Activated CD8-positive, alpha-beta T cell treated with anti-CD3 and anti-CD28 coated beads for 36 hours (primary cell): ENCODE measurements at regions of chr19 and their contacts with region 1.

Region 1: GRCh38 chr19:2151339-2152229 is at the start of gene AP3D1:
- DNase-seq: peak; percentile 100
- ATAC-seq: peak; percentile 92
- H3K4me3 Mint-ChIP-seq: peak within 1 kb of the TSS; percentile 81
- H3K27ac Mint-ChIP-seq: peak within 1 kb of the TSS; percentile 80
- H3K4me1 Mint-ChIP-seq: peaks cover 39% of the 10 kb centered on the region
- H3K27me3 Mint-ChIP-seq: no peaks in the 10 kb centered on the region
- CTCF ChIP-seq: no peak
- total RNA-seq, gene AP3D1: 73.7 to 74.1 TPM

Region 2: DNA sequence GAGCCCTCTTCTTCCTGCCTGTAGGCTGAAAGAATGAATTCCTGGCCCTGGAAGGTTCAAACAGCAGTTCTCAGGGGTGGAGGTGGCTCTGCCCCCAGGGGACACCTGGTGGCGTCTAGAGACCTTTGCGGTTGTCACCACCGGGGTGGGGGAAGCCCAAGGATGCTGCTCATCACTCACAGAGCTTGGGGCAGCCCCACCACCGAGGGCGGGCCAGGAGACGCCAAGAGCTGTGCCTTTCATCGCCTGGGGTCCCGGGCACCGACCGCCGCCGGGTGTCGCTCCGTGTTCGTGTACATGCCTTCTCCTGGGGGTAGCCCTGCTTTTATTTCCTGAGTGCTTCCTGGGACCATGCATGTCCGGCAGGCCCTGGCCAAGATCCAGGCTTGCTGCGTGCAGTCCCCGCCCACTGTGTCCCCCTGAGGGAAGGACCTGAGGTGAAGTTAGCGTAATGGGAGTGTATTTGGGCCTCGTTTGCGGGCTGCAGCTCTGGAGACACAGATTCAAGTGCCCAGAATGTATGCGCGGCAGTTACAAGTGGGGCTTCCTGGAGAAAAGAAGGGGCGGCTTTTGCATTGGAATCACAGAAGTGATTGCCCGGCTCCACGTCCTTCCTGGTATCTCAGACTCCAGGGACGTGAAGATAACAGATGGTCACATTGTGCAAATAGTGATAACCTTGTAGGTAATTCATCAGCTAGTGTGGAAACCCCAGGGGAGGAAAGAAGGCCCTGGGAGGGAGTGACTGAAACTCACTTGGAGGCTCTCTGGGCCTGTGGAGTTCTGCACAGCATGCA is 20.0 kb after region 1 on chr19:
- CTCF ChIA-PET with region 1: interaction called, 15 read pairs
- POLR2A ChIA-PET with region 1: no interaction called
- intact Hi-C with region 1: no loop called
- DNase-seq: peak; percentile 98
- ATAC-seq: peak; percentile 81
- H3K4me3 Mint-ChIP-seq: peak overlapping the region; percentile 62
- H3K27ac Mint-ChIP-seq: peak overlapping the region; percentile 81
- H3K4me1 Mint-ChIP-seq: peaks cover 75% of the 10 kb centered on the region
- H3K27me3 Mint-ChIP-seq: no peaks in the 10 kb centered on the region
- CTCF ChIP-seq: peak; percentile 37

Region 3: DNA sequence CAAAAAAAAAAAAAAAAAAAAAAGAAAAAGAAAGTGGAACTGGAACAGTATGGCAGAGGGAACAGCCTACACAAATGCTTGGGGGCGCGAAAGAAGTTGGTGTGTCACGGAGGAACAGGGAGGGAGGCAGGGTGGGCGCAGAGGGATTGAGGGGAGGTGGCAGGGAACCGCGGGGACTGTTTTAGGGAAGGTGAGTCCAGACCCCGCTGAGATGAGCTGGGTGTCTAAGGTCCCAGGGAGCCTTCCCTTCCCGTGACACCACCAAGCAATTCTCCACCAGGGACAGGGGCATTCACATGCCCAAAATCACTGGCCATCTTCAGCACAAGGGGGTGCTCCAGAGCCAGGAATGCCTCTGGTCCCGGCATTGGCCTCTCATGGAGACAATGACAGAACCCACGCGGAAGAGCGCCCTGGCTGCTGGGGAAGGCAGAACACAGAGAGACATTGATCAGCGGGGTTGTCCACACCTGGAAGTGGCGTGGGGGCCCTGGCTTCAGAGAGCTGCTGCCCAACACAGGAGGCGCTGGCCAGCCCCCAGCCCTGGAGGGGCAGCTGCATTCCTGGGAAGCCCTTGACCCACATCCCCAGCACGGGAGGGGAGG is 123.4 kb after region 1 on chr19:
- CTCF ChIA-PET with region 1: interaction called, 10 read pairs
- POLR2A ChIA-PET with region 1: no interaction called
- intact Hi-C with region 1: no loop called
- DNase-seq: peak; percentile 60
- ATAC-seq: no peak
- H3K4me3 Mint-ChIP-seq: no peak overlapping the region
- H3K27ac Mint-ChIP-seq: peak overlapping the region; percentile 52
- H3K4me1 Mint-ChIP-seq: peaks cover 31% of the 10 kb centered on the region
- H3K27me3 Mint-ChIP-seq: no peaks in the 10 kb centered on the region
- CTCF ChIP-seq: no peak